PC-3 (cell line): ENCODE measurements at regions of chr18 and their contacts with region 1.

Region 1: GRCh38 chr18:31685097-31686082 is 1.0 kb upstream of the B4GALT6 start:
- DNase-seq: peak; percentile 48
- ATAC-seq: peak; percentile 63
- H3K4me3 ChIP-seq: peak overlapping the region; percentile 63
- H3K27ac ChIP-seq: no peak overlapping the region
- H3K4me1 ChIP-seq: peaks cover 28% of the 10 kb centered on the region
- H3K27me3 ChIP-seq: no peaks in the 10 kb centered on the region
- CTCF ChIP-seq: no peak

Region 2: GRCh38 chr18:31555971-31556747 is 129.2 kb before region 1 on chr18:
- CTCF ChIA-PET with region 1: no interaction called
- POLR2A ChIA-PET with region 1: no interaction called
- intact Hi-C with region 1: loop called (anchors 2 kb)
- DNase-seq: peak; percentile 64
- ATAC-seq: peak; percentile 64
- H3K4me3 ChIP-seq: no peak overlapping the region; the same call in 1 of the 2 replicates
- H3K27ac ChIP-seq: no peak overlapping the region
- H3K4me1 ChIP-seq: peaks cover 7% of the 10 kb centered on the region; the same call in 1 of the 2 replicates
- H3K27me3 ChIP-seq: no peaks in the 10 kb centered on the region
- CTCF ChIP-seq: peak; percentile 65

Region 3: DNA sequence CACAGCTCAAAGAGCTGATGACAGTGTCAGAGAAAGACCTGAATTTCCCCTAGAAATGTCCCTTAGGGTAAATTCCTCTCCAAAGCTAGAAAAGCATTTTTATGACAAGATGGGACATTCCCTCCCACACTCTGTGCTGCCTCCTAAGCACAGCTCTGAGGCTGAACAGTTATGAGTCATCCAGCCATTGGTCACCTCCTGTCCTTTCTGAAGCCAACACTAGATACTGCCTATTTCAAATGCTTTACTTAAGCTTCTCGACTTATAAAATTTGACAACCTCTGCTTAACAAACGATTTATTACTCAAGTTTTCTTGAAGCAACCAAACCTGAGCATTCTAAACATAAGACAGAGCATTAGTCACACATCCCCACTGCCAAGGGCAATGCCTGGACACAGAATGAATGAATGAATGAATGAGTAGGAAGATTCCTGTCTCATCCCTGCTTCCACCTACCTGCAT is 36.4 kb before region 1 on chr18:
- CTCF ChIA-PET with region 1: no interaction called
- POLR2A ChIA-PET with region 1: no interaction called
- intact Hi-C with region 1: loop called (anchors 5 kb)
- DNase-seq: peak; percentile 83
- ATAC-seq: peak; percentile 98
- H3K4me3 ChIP-seq: no peak overlapping the region
- H3K27ac ChIP-seq: peak overlapping the region; percentile 29
- H3K4me1 ChIP-seq: peaks cover 51% of the 10 kb centered on the region
- H3K27me3 ChIP-seq: no peaks in the 10 kb centered on the region
- CTCF ChIP-seq: no peak